Testis (tissue), 5 donors: ENCODE measurements at regions of chr4 and their contacts with region 1.

Region 1: DNA sequence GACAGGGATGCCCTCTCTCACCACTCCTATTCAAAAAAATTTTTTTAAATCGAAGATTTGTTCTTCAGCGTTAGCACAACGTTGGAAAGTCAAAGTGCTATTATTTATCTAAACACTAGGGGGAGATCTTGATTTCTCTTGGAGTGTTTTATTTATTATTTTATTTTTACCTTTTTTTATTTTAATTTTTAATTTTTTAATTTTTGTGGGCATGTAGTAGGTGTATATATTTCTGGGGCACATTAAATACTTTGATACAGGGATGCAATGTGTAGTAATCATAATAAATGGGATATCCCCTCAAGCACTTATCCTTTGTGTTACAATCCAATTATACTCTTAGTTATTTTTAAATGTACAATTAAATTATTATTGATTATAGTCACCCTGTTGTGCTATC is 37.4 kb upstream of the SLC10A4 start:
- DNase-seq: no peak
- H3K4me3 ChIP-seq: no peak overlapping the region
- H3K27ac ChIP-seq: no peak overlapping the region
- H3K4me1 ChIP-seq: no peaks in the 10 kb centered on the region
- H3K27me3 ChIP-seq: no peaks in the 10 kb centered on the region
- CTCF ChIP-seq: peak in 1 of 3 experiments; percentile 64
- POLR2A ChIP-seq: no peak

Region 2: DNA sequence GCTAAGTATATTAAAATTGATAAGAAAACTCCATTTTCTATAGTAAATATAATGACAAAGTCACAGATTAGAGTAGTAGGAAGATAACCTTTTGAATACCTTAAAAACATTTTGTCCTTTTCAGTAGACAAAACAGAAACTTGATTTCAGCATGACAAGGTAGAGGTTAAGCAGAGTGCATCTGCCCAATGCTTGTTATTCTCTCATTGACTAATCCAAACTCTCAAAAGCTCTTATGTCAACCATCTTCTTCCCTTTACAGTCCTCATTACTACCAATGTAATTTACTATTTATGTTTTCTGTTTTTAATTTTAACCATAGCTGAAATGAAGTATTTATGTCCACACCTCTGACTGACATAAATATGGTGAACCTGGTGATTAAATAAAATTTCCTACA is 418.1 kb before region 1 on chr4:
- intact Hi-C with region 1: no loop called
- DNase-seq: no peak
- H3K4me3 ChIP-seq: no peak overlapping the region
- H3K27ac ChIP-seq: no peak overlapping the region
- H3K4me1 ChIP-seq: no peaks in the 10 kb centered on the region
- H3K27me3 ChIP-seq: no peaks in the 10 kb centered on the region
- CTCF ChIP-seq: no peak
- POLR2A ChIP-seq: no peak

Region 3: DNA sequence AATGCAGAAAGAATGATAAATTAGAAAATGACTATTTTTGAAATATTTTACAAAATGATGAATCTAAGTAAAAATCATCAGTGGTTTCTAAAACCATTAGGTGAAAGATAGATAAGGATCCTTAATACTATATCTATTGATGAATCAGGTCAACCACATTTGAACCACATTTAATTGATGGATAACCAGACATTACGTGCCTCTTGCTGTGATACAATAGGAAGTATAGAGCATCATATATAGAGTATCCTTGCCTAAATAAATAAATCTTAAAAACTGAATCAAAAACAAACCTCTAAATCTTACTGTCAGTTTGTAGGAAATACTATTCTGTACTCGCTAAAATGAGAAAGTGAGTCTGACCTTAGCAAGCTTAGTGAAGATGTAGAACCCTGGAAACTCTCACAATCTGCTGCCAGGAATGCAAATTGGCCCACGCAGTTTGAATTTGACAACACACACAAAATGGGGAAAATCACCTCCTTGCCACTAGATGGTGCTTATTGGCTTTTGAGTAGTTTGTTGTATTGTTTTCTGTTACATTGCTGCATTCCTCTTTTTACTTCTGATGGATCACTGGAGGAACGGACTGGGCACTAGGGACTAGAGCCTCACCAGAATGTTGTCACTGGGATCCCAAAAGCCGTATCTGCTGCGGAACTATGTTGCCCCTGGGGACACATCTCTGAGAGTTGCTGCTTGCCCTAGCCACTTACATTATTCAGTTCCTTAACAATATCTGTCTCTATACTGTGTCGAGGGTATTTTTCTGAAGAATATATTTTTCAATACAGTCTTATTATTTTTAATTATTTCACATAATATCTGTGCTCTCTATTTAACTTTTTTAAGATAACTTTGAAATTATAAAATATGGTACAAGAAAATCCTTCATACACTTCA is 129.7 kb before region 1 on chr4:
- intact Hi-C with region 1: loop called (anchors 5 kb)
- DNase-seq: no peak
- H3K4me3 ChIP-seq: no peak overlapping the region
- H3K27ac ChIP-seq: no peak overlapping the region
- H3K4me1 ChIP-seq: no peaks in the 10 kb centered on the region
- H3K27me3 ChIP-seq: no peaks in the 10 kb centered on the region
- CTCF ChIP-seq: peak in 2 of 3 experiments; percentile 30 to 31
- POLR2A ChIP-seq: no peak